A549 (cell line): ENCODE measurements at regions of chr11 and their contacts with region 1.

Region 1: DNA sequence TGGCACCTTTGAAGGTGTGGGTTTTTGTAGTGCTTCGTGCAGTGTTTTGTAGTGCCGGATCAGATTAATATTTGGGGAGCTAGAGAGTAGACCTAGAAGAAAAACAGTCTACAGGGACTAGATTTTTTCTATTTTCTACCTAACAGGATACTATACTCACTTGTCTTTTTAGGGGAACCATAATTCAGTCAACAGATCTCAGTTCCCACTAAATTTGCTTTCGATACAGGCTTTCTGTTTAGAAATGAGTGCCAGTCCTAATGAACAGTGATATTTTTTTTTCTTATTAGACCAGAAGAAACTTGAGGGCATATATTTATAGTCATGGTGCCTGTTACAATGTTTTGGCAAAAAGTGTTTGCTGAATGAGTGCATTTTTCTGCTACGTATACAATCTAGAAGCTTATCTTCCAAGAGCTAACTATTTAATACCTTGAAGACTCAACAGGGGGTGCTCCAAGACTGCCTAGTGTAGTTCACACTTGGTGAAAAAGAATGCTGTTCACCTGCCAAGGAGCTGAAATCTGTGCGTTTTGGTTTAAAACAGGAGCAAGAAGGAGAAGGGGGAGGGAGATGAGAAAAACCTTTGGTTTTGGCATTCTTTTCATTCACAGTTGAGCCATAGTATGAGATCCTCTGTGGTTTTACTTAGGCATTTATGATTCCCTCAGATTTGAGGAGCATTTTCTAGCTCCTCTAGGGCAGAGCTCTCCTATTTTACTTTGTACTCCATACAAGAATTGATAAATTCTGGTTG is 44.9 kb upstream of the VSTM5 start:
- DNase-seq: peak in 1 of 2 experiments; percentile 53
- ATAC-seq: peak; percentile 77 to 83
- H3K4me3 ChIP-seq: no peak overlapping the region
- H3K27ac ChIP-seq: no peak overlapping the region
- H3K4me1 ChIP-seq: no peaks in the 10 kb centered on the region
- CTCF ChIP-seq: peak; percentile 65
- EP300 ChIP-seq: no peak
- POLR2A ChIP-seq: no peak
- RAD21 ChIP-seq: peak; percentile 78 to 85

Region 2: GRCh38 chr11:94342250-94342649 is 447.0 kb after region 1 on chr11:
- CTCF ChIA-PET with region 1: no interaction called
- POLR2A ChIA-PET with region 1: no interaction called
- DNase-seq: no peak
- ATAC-seq: no peak
- H3K4me3 ChIP-seq: no peak overlapping the region
- H3K27ac ChIP-seq: no peak overlapping the region
- H3K4me1 ChIP-seq: no peaks in the 10 kb centered on the region
- CTCF ChIP-seq: no peak
- EP300 ChIP-seq: no peak
- POLR2A ChIP-seq: no peak
- RAD21 ChIP-seq: no peak

Region 3: DNA sequence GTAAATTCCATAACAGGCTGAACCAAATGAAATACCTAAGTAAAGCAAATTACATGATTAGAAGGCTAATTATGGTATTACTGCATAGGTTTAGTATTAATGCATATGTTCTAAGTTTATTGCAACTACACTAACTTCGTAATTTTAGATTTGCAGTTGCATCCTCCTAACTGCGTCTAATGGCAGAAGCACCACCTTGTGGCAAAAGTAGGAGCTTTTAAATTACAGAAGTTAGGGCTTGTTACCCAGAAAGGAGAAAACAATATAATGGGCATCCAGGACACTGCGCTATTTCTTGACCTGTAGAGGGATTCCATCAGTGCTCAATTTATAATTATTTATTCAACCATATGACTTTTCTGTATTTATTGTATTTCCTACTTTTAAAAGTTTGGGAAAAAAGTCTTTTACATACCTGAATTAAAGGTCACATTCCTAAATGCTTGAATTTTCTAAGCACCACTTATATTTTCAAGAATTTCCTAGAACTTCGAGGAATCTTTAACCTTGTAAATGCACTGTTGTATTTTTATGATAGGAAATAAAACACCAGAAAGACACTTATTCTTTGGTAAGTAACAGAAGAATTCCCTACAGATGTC is 522.2 kb after region 1 on chr11:
- CTCF ChIA-PET with region 1: interaction called, 39 read pairs
- POLR2A ChIA-PET with region 1: no interaction called
- DNase-seq: peak in 1 of 2 experiments; percentile 28
- ATAC-seq: peak in 1 of 2 experiments; percentile 72; a peak in 2 of 6 replicates
- H3K4me3 ChIP-seq: no peak overlapping the region
- H3K27ac ChIP-seq: no peak overlapping the region
- H3K4me1 ChIP-seq: no peaks in the 10 kb centered on the region
- CTCF ChIP-seq: peak; percentile 55
- EP300 ChIP-seq: no peak
- POLR2A ChIP-seq: no peak
- RAD21 ChIP-seq: peak; percentile 59; a peak in 4 of 5 replicates

Region 4: GRCh38 chr11:94504689-94505293 is 609.5 kb after region 1 on chr11:
- CTCF ChIA-PET with region 1: interaction called, 14 read pairs
- POLR2A ChIA-PET with region 1: no interaction called
- DNase-seq: peak; percentile 17 to 42
- ATAC-seq: peak; percentile 34 to 62; a peak in 4 of 6 replicates
- H3K4me3 ChIP-seq: no peak overlapping the region
- H3K27ac ChIP-seq: no peak overlapping the region
- H3K4me1 ChIP-seq: no peaks in the 10 kb centered on the region
- CTCF ChIP-seq: peak; percentile 67
- EP300 ChIP-seq: no peak
- POLR2A ChIP-seq: no peak
- RAD21 ChIP-seq: peak; percentile 69 to 75